Heart right ventricle (tissue), 16 donors: ENCODE measurements at regions of chr4 and their contacts with region 1.

Region 1: DNA sequence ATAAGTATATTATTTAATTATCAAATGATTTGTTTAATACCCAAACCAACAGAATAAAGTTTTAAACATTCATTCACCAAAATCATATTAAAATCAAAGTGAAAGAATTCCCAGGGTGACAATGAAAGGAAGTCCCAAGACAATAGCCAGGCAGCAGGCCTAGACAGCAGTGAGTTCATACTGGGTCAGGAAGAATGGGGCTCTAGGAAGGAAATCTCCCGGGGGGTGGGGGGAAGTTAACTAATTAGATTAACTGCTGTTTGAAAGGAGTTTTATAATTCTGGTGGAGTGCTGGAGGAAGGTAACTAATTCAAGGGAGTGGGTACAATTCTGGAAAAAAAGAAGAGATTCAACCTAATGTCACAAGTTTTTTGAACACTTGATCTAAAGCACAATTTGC is 104.1 kb downstream of the ZAR1 start:
- DNase-seq: peak; percentile 10 to 77
- ATAC-seq: peak; percentile 73 to 97 (median 94)
- H3K4me3 ChIP-seq: no peak overlapping the region
- H3K27ac ChIP-seq: peak overlapping the region in 5 of 10 donors; percentile 34 to 72 (median 59)
- H3K4me1 ChIP-seq: peaks cover 0 to 68% (median 16%) of the 10 kb centered on the region in 9 donors
- H3K27me3 ChIP-seq: no peaks in the 10 kb centered on the region
- CTCF ChIP-seq: no peak

Region 2: DNA sequence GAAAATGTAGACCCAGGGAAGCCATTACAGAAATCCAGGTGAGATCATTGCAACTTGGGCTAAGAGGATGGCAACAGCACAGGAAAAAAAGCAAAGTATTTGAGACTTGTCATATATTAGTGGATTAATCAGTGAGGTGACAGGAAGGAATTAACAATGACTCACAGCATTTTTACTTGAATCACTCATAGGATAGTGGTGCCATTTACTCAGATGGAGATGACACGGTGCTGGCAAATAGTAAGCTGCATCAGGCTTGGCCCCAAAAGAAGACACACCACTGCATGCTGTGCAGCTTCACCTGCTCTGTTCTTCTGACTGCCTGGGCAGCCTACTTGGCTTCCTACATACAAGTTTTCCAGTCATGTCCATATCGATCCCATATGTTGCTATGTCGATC is 41.1 kb after region 1 on chr4:
- intact Hi-C with region 1: loop called in 2 of 10 experiments (anchors 2 to 5 kb)
- DNase-seq: no peak
- ATAC-seq: peak in 3 of 8 donors; percentile 27 to 50 (median 28)
- H3K4me3 ChIP-seq: no peak overlapping the region
- H3K27ac ChIP-seq: peak overlapping the region in 2 of 10 donors; percentile 9 to 39
- H3K4me1 ChIP-seq: peaks cover 0 to 43% (median 27%) of the 10 kb centered on the region in 9 donors
- H3K27me3 ChIP-seq: no peaks in the 10 kb centered on the region
- CTCF ChIP-seq: no peak

Region 3: DNA sequence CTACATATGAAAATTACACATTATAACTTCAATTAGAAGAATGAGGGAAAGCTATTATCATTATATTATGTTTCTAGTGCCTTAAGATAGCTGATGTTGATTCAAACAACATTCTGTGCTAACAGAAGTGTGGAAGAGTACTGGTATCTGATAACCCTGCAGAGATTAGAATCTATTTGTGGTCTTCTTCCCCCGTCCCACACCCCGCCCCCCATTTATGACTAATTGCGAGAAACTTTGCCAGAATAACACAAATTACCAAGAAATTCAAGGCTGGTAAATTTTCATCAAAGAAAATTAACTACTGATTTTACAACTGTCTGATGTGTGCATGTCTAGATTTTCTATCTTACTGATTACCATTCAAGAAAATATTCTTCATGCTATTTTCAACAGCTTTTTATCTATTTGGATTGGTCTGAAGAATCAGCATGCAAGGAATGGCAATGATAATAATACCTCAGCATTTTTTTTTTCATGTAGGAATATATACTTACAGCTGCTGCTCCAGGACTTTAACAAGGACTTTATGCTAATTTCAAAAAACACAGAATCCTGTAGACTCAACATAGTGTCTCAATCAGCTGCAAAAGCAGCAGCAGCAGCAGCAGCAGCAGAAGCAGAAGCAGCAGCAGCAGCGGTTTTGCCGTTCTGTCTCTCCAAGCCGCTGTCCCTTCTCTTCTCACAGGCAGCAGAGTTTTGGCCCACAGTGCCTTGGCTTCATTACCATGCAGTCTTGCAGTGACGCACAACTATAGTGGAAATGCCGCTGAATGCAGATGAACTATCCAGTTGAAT is 59.2 kb after region 1 on chr4:
- intact Hi-C with region 1: no loop called
- DNase-seq: peak; percentile 41 to 70
- ATAC-seq: peak; percentile 85 to 96 (median 93)
- H3K4me3 ChIP-seq: peak overlapping the region in 8 of 10 donors; percentile 3 to 44 (median 34)
- H3K27ac ChIP-seq: peak overlapping the region in 8 of 10 donors; percentile 6 to 78 (median 60)
- H3K4me1 ChIP-seq: peaks cover 0 to 59% (median 43%) of the 10 kb centered on the region in 9 donors
- H3K27me3 ChIP-seq: no peaks in the 10 kb centered on the region
- CTCF ChIP-seq: no peak

Region 4: GRCh38 chr4:48668254-48669017 is 74.3 kb after region 1 on chr4:
- intact Hi-C with region 1: loop called in 4 of 10 experiments (anchors 5 to 10 kb)
- DNase-seq: no peak
- ATAC-seq: peak; percentile 24 to 85 (median 66)
- H3K4me3 ChIP-seq: no peak overlapping the region
- H3K27ac ChIP-seq: peak overlapping the region in 9 of 10 donors; percentile 33 to 80 (median 55)
- H3K4me1 ChIP-seq: peaks cover 0 to 76% (median 44%) of the 10 kb centered on the region in 9 donors
- H3K27me3 ChIP-seq: no peaks in the 10 kb centered on the region
- CTCF ChIP-seq: no peak